ENCODE measurements at regions of chr1 and their contacts with region 1.

Region 1: GRCh38 chr1:226973898-226974543 is 33.9 kb downstream of the COQ8A start:
- DNase-seq: peak; percentile 73 to 79
- ATAC-seq: peak; percentile 87
- H3K4me3 ChIP-seq: no peak overlapping the region
- H3K27ac ChIP-seq: peak overlapping the region; percentile 89
- H3K4me1 ChIP-seq: peaks cover 3% of the 10 kb centered on the region in 2 donors
- H3K27me3 ChIP-seq: no peaks in the 10 kb centered on the region

Region 2: GRCh38 chr1:226870401-226871279 is 103.4 kb before region 1 on chr1 and contains the start of gene PSEN2:
- intact Hi-C with region 1: no loop called
- DNase-seq: peak; percentile 74 to 92
- ATAC-seq: peak; percentile 89
- H3K4me3 ChIP-seq: peak within 1 kb of the TSS; percentile 39 to 86
- H3K27ac ChIP-seq: peak within 1 kb of the TSS; percentile 4 to 15
- H3K4me1 ChIP-seq: no peaks in the 10 kb centered on the region
- H3K27me3 ChIP-seq: no peaks in the 10 kb centered on the region
- total RNA-seq, gene PSEN2: 14.4 to 15.7 TPM

Region 3: GRCh38 chr1:226940029-226940805 is 33.8 kb before region 1 on chr1 and contains the start of gene COQ8A:
- intact Hi-C with region 1: loop called in 1 of 2 experiments (anchors 1 kb)
- DNase-seq: peak; percentile 99 to 100
- ATAC-seq: peak; percentile 99
- H3K4me3 ChIP-seq: peak within 1 kb of the TSS; percentile 43 to 51
- H3K27ac ChIP-seq: peak within 1 kb of the TSS; percentile 57 to 87
- H3K4me1 ChIP-seq: peaks cover 0 to 4% of the 10 kb centered on the region in 2 donors
- H3K27me3 ChIP-seq: no peaks in the 10 kb centered on the region
- total RNA-seq, gene COQ8A: 13.9 to 27.3 TPM

Measured in aorta (tissue), 5 donors.